CD8-positive, alpha-beta memory T cell (primary cell): ENCODE measurements at regions of chr20 and their contacts with region 1.

Region 1: DNA sequence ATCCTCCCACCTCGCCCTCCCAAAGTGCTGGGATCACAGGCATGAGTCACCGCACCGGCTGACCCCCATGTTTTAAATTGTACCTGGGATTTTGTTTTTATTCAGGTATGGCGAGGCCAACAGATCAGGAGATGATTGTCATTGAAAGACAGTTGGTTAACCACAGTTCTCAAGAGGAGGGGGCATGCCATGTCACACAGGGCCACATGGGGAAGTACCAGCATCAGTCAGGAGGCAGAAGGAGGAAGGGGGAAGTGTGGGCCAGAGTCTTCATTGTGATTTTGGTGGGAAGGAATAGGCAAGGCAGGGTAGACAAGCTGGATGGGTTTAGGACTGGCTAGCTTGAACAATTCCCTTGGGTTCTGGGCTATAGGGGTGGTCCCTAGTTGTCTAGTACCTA is 9.9 kb upstream of the MMP9 start:
- DNase-seq: no peak
- H3K4me3 ChIP-seq: no peak overlapping the region
- H3K4me3 Mint-ChIP-seq: peak overlapping the region in 4 of 7 donors; percentile 6 to 27 (median 21)
- H3K27ac ChIP-seq: no peak overlapping the region
- H3K27ac Mint-ChIP-seq: peak overlapping the region in 7 of 8 donors; percentile 2 to 71 (median 47)
- H3K4me1 ChIP-seq: peaks cover 54% of the 10 kb centered on the region
- H3K4me1 Mint-ChIP-seq: peaks cover 31 to 54% (median 48%) of the 10 kb centered on the region in 3 donors
- H3K27me3 ChIP-seq: no peaks in the 10 kb centered on the region
- H3K27me3 Mint-ChIP-seq: peaks cover 11 to 22% of the 10 kb centered on the region in 2 donors

Region 2: DNA sequence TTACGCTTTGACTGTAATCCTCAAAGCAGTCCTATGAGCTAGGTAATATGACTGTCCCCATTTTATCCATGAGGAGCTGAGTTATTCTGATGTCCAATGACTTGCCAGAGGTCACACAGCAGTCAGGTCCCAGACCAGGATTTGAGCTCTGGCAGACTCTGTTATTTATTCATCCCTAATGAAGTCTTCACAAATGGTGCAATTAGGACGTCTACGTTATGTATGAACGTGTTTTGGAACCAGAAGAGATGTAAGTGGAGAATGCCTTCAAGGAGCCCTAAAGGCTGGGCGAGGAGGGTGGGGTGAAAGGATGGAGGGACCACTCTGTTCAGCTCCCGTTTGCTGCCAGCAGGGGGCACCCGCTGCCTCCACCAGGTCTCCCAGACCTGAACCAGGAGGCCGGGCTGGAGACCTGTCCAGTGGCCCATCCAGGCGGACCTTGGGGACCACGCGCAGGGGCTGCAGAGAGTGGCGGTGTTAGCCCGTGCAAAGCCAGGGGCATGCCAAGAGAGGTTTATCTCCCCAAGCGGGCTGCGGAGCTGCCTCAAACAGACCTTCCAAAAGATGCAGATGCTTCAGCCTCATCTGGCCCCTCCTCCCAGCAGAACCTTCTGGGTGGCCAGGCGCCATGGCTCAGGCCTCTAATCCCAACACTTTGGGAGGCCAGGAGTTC is 11.5 kb before region 1 on chr20:
- CTCF ChIA-PET with region 1: interaction called, 24 read pairs
- POLR2A ChIA-PET with region 1: no interaction called
- DNase-seq: peak; percentile 61 to 80 (median 67)
- H3K4me3 ChIP-seq: no peak overlapping the region
- H3K4me3 Mint-ChIP-seq: no peak overlapping the region
- H3K27ac ChIP-seq: no peak overlapping the region
- H3K27ac Mint-ChIP-seq: no peak overlapping the region
- H3K4me1 ChIP-seq: no peaks in the 10 kb centered on the region
- H3K4me1 Mint-ChIP-seq: no peaks in the 10 kb centered on the region
- H3K27me3 ChIP-seq: no peaks in the 10 kb centered on the region
- H3K27me3 Mint-ChIP-seq: peaks cover 14% of the 10 kb centered on the region in 2 donors